ENCODE measurements at regions of chr18 and their contacts with region 1.

Region 1: GRCh38 chr18:66043009-66043408 is 292.2 kb downstream of the CDH7 start:
- DNase-seq: no peak
- H3K4me3 Mint-ChIP-seq: no peak overlapping the region
- H3K27ac Mint-ChIP-seq: no peak overlapping the region
- H3K4me1 Mint-ChIP-seq: no peaks in the 10 kb centered on the region
- H3K27me3 Mint-ChIP-seq: peaks cover 22% of the 10 kb centered on the region
- CTCF ChIP-seq: no peak

Region 2: DNA sequence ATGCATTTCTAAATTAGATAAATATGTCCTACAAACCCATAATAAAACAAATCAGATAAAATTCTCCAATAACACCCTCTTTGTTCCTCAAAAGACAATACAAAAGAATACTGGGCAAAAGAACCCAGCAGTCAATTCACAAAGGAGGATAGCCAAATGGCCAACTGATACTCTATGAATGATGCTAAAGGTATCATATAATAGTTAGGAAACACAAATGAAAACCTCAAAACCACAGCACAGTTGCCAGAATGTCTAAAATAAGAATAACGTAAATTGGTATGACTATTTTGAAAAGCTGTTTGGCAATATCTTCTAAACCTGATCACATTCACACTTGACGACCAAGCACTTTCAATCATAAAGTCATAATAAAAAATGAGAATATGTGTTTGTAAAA is 23.2 kb after region 1 on chr18:
- CTCF ChIA-PET with region 1: no interaction called
- POLR2A ChIA-PET with region 1: no interaction called
- intact Hi-C with region 1: loop called (anchors 1 kb)
- DNase-seq: no peak
- H3K4me3 Mint-ChIP-seq: no peak overlapping the region
- H3K27ac Mint-ChIP-seq: no peak overlapping the region
- H3K4me1 Mint-ChIP-seq: no peaks in the 10 kb centered on the region
- H3K27me3 Mint-ChIP-seq: no peaks in the 10 kb centered on the region
- CTCF ChIP-seq: no peak